ENCODE measurements at regions of chr18 and their contacts with region 1.

Region 1: GRCh38 chr18:60413944-60414547 is 41.5 kb upstream of the MC4R start:
- DNase-seq: peak; percentile 10
- ATAC-seq: peak; percentile 92
- H3K4me3 ChIP-seq: no peak overlapping the region
- H3K27ac ChIP-seq: no peak overlapping the region
- H3K4me1 ChIP-seq: no peaks in the 10 kb centered on the region
- H3K27me3 ChIP-seq: no peaks in the 10 kb centered on the region
- CTCF ChIP-seq: peak; percentile 62 to 73 (median 68); a peak in 5 of 6 replicates
- POLR2A ChIP-seq: no peak
- RAD21 ChIP-seq: peak; percentile 60

Region 2: GRCh38 chr18:59783138-59783537 is 630.9 kb before region 1 on chr18:
- CTCF ChIA-PET with region 1: no interaction called
- POLR2A ChIA-PET with region 1: no interaction called
- RAD21 ChIA-PET with region 1: no interaction called
- intact Hi-C with region 1: loop called (anchors 5 kb)
- DNase-seq: peak; percentile 85
- ATAC-seq: peak; percentile 96
- H3K4me3 ChIP-seq: peak overlapping the region; percentile 22 to 34; a peak in 3 of 4 replicates
- H3K27ac ChIP-seq: no peak overlapping the region
- H3K4me1 ChIP-seq: peaks cover 11 to 31% of the 10 kb centered on the region in 2 experiments
- H3K27me3 ChIP-seq: no peaks in the 10 kb centered on the region
- CTCF ChIP-seq: peak; percentile 66 to 82 (median 78); a peak in 5 of 6 replicates
- POLR2A ChIP-seq: no peak
- RAD21 ChIP-seq: peak; percentile 79

Region 3: DNA sequence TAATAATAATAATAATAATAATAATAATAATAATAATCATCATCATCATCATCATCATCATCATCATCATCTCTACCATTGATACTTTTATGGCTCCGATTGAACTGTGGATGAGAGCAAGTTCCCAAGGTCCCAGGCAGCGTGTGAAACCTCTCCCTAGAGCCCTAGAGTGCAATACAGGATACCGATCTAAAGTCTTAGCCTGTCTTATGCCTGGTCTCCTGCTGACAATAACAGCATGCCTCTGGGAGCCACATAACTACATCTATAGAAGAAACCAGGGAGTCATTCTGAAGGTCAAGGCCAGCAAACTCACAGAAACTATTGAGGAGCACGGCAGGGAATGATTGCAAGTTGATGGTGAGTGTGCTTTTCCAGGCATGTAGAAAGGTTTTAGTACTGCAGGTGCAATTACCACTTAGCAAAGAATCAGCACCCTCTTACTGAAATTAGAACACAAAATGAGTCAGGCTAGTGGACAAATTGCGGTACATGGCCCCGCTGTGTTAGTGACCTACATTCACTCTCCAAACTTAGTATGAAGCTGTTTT is 462.0 kb after region 1 on chr18:
- CTCF ChIA-PET with region 1: no interaction called
- POLR2A ChIA-PET with region 1: no interaction called
- RAD21 ChIA-PET with region 1: no interaction called
- intact Hi-C with region 1: no loop called
- DNase-seq: no peak
- ATAC-seq: no peak
- H3K4me3 ChIP-seq: no peak overlapping the region
- H3K27ac ChIP-seq: no peak overlapping the region
- H3K4me1 ChIP-seq: no peaks in the 10 kb centered on the region
- H3K27me3 ChIP-seq: peaks cover under 1% of the 10 kb centered on the region; the same call in 1 of the 2 replicates
- CTCF ChIP-seq: no peak
- POLR2A ChIP-seq: no peak
- RAD21 ChIP-seq: no peak

Measured in HCT116 (cell line).